GM12878 (cell line): ENCODE measurements at regions of chr2 and their contacts with region 1.

Region 1: DNA sequence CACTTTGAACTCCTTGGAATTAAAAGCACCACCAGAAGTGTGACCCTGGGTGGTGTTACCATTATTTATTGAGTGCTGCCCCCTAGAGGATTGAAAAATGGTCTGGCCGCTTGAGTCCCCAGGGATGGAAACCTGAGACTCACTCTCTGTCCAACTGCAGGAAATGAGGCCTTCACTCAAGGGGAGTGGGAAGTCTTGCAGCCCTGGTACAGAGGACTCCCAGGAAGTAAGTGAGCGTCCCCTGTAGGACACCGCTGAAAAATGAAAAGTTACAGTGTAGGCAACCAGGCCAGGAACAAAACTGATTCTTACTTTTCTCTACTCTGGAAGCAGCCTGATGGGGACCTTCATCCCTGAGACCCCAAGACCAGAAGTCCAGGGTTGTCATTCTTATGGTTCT is 2.2 kb upstream of the NRP2 start:
- DNase-seq: no peak
- ATAC-seq: peak; percentile 81
- H3K4me3 ChIP-seq: no peak overlapping the region
- H3K27ac ChIP-seq: no peak overlapping the region
- H3K4me1 ChIP-seq: peaks cover 11% of the 10 kb centered on the region
- H3K27me3 ChIP-seq: peaks cover 11 to 13% of the 10 kb centered on the region in 2 experiments
- CTCF ChIP-seq: peak; percentile 60 to 78 (median 63)
- EP300 ChIP-seq: no peak
- POLR2A ChIP-seq: no peak
- RAD21 ChIP-seq: peak; percentile 69

Region 2: DNA sequence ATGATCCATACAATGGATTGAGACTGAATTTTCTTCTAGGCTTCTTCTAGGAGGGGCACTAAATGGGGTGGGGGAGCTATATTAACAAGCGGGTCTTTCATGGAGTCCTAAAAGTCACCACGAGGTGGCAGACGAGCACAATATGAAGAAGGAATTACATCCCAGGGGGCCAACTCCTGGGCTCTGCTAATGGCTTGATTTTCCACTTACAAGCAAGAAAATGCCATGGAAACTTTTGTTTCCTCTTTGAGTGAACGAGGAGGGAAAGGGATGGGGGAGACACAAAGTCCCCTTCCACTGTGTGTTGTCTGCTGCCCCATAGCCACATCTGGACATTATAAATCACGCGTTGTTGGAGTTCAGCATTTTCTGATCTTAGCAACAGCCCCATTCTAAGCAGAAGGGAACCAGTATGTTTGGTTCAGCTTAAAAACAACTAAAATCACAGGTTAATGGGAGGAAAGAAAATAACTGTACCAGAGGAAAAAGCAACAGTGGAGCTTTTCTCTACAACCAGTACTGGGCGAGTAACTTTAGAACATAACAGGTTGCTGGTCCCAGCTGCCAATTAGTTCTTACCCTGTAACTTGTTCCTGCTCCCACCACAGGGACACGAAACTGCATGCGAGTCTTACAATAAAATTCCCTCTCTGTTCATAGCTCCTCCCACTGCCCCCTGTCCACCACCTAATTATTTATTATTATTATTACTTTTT is 1419.7 kb before region 1 on chr2:
- CTCF ChIA-PET with region 1: interaction called, 12 read pairs
- POLR2A ChIA-PET with region 1: no interaction called
- RAD21 ChIA-PET with region 1: interaction called, 6 read pairs
- SMC1A ChIA-PET with region 1: interaction called, 3 read pairs
- in situ Hi-C with region 1: no loop called
- intact Hi-C with region 1: no loop called
- DNase-seq: no peak
- ATAC-seq: peak; percentile 76
- H3K4me3 ChIP-seq: no peak overlapping the region
- H3K27ac ChIP-seq: no peak overlapping the region
- H3K4me1 ChIP-seq: no peaks in the 10 kb centered on the region
- H3K27me3 ChIP-seq: no peaks in the 10 kb centered on the region
- CTCF ChIP-seq: peak; percentile 51 to 55 (median 54); a peak in 5 of 6 replicates
- EP300 ChIP-seq: no peak
- POLR2A ChIP-seq: no peak
- RAD21 ChIP-seq: 0 out of 2 replicates have a peak, but pooled peaks have one; percentile 30

Region 3: GRCh38 chr2:205323929-205324328 is 356.1 kb before region 1 on chr2:
- CTCF ChIA-PET with region 1: interaction called, 17 read pairs
- POLR2A ChIA-PET with region 1: no interaction called
- RAD21 ChIA-PET with region 1: interaction called, 11 read pairs
- SMC1A ChIA-PET with region 1: interaction called, 3 read pairs
- in situ Hi-C with region 1: no loop called
- intact Hi-C with region 1: loop called (anchors 1 kb)
- DNase-seq: no peak
- ATAC-seq: peak; percentile 69
- H3K4me3 ChIP-seq: no peak overlapping the region
- H3K27ac ChIP-seq: no peak overlapping the region
- H3K4me1 ChIP-seq: no peaks in the 10 kb centered on the region
- H3K27me3 ChIP-seq: no peaks in the 10 kb centered on the region
- CTCF ChIP-seq: peak; percentile 36 to 50 (median 44); a peak in 5 of 6 replicates
- EP300 ChIP-seq: no peak
- POLR2A ChIP-seq: no peak
- RAD21 ChIP-seq: peak; percentile 36; the same call in 1 of the 2 replicates

Region 4: GRCh38 chr2:205695460-205695991 is 15.5 kb after region 1 on chr2:
- CTCF ChIA-PET with region 1: interaction called, 11 read pairs
- POLR2A ChIA-PET with region 1: no interaction called
- RAD21 ChIA-PET with region 1: interaction called, 3 read pairs
- SMC1A ChIA-PET with region 1: interaction called, 4 read pairs
- in situ Hi-C with region 1: no loop called
- intact Hi-C with region 1: no loop called
- DNase-seq: no peak
- ATAC-seq: no peak
- H3K4me3 ChIP-seq: no peak overlapping the region
- H3K27ac ChIP-seq: no peak overlapping the region
- H3K4me1 ChIP-seq: peaks cover 13% of the 10 kb centered on the region
- H3K27me3 ChIP-seq: peaks cover 0 to 2% of the 10 kb centered on the region in 2 experiments; a peak in 2 of 4 replicates
- CTCF ChIP-seq: no peak
- EP300 ChIP-seq: no peak
- POLR2A ChIP-seq: no peak
- RAD21 ChIP-seq: no peak

Region 5: DNA sequence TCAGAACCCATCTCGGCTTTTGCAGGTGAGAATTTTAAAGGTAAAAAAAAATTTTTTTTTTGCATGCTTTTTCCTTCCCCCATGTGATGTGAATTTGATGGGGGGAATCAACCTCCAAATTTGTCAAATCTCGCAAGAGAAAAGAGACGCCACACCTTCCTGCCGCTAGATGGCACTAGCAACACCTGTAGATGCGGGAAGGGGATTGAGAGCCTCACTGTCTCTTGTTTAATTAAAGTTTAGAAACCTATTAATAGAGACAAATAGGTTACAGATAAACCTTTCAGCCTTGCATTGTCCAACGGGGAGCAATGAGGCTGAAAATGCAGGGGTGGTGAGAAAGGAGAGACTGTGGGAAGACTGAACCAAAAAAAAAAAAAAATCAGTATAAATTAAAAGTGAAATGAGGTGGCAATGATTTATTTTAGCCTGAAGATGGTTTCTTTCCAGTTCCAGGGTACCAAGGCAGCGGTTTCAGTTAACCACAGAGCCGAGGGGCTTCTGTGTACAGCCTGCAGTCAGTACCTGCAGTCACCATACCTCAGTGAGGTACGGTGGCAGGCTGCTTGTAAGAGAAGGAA is 86.8 kb after region 1 on chr2:
- CTCF ChIA-PET with region 1: interaction called, 3 read pairs
- POLR2A ChIA-PET with region 1: no interaction called
- RAD21 ChIA-PET with region 1: no interaction called
- SMC1A ChIA-PET with region 1: no interaction called
- in situ Hi-C with region 1: no loop called
- intact Hi-C with region 1: loop called (anchors 5 kb)
- DNase-seq: no peak
- ATAC-seq: peak; percentile 60
- H3K4me3 ChIP-seq: no peak overlapping the region
- H3K27ac ChIP-seq: no peak overlapping the region
- H3K4me1 ChIP-seq: no peaks in the 10 kb centered on the region
- H3K27me3 ChIP-seq: peaks cover 0 to 2% of the 10 kb centered on the region in 2 experiments; a peak in 1 of 4 replicates
- CTCF ChIP-seq: peak; percentile 77 to 89 (median 79)
- EP300 ChIP-seq: no peak
- POLR2A ChIP-seq: no peak
- RAD21 ChIP-seq: peak; percentile 67